Mammary epithelial cell (primary cell): ENCODE measurements at regions of chr5 and their contacts with region 1.

Region 1: GRCh38 chr5:179959641-179960040 is 51.9 kb upstream of the TBC1D9B start:
- DNase-seq: no peak
- H3K4me3 ChIP-seq: no peak overlapping the region
- H3K27ac ChIP-seq: no peak overlapping the region
- H3K4me1 ChIP-seq: no peaks in the 10 kb centered on the region
- H3K27me3 ChIP-seq: no peaks in the 10 kb centered on the region
- CTCF ChIP-seq: no peak

Region 2: DNA sequence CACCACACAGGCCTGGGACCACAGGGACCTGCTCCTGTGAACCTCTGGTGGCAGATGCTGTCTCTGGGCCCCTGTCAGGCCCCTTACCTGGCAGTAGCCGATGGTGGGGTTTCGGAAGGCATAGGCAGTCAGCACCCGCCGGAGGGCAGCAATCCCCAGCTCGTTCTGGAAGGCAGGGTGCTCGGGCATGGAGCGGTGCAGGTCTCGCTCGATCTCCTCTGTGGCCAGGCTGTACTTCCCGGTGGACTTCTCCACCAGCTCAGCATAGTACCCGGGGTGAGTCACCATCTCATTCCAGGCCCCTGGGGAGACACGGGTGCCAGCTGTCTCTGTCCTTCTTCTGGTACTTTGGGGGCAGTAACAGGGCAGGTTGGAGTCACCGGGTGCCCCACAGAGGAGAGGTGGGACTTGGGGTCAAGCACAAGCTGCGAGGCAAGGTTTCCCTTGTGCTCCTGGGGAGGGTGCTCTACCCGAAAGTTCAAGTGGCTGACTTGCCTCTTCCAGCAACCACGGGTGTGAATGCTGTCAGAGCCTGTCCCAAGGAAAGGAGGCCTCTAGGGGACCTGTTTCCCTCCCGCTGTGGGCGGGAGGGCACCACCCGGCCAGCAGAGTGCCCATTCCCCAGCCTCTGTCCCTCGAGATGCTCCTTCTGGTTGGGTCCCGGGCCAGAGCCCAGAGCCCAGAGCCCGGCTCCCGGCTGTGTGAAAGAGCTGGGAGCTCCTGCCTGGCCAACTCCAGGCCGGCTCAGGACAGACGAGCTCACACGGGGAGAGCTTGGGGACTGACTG is 81.2 kb before region 1 on chr5:
- CTCF ChIA-PET with region 1: no interaction called
- dilution Hi-C with region 1: no loop called
- in situ Hi-C with region 1: no loop called
- intact Hi-C with region 1: no loop called
- DNase-seq: no peak
- H3K4me3 ChIP-seq: no peak overlapping the region
- H3K27ac ChIP-seq: no peak overlapping the region
- H3K4me1 ChIP-seq: no peaks in the 10 kb centered on the region
- H3K27me3 ChIP-seq: no peaks in the 10 kb centered on the region
- CTCF ChIP-seq: no peak

Region 3: DNA sequence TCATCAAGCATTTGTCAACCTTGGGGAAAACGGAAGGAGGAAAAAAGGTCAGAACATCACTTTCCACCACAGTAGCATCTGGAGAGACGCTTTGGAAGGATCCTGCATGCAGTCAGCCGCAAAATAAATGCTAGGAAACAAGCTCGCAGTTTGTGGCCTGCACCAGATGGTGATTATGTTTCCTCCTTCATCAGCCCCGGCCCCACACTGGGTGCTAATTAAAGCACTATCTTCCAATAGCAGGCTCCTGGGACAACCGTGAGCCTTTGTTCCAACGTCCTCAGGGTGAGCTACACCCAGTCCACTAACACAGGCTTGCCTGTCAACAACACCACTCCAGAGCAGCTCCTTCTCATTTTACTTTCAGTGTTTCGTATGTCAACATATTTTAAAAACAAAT is 47.9 kb after region 1 on chr5:
- CTCF ChIA-PET with region 1: no interaction called
- dilution Hi-C with region 1: loop called (anchors 5 kb)
- in situ Hi-C with region 1: no loop called
- intact Hi-C with region 1: no loop called
- DNase-seq: no peak
- H3K4me3 ChIP-seq: no peak overlapping the region
- H3K27ac ChIP-seq: no peak overlapping the region
- H3K4me1 ChIP-seq: no peaks in the 10 kb centered on the region
- H3K27me3 ChIP-seq: no peaks in the 10 kb centered on the region
- CTCF ChIP-seq: no peak